Activated CD4-positive, alpha-beta memory T cell treated with anti-CD3 and anti-CD28 coated beads, Interleukin-2, amount 10 ng/mL, durations not matched to agents 7 days and 5 days (primary cell): ENCODE measurements at regions of chr9 and their contacts with region 1.

Region 1: GRCh38 chr9:128552153-128552743 is at the start of gene SPTAN1:
- DNase-seq: peak; percentile 96
- H3K4me3 Mint-ChIP-seq: peak within 1 kb of the TSS; percentile 94
- H3K27ac Mint-ChIP-seq: peak within 1 kb of the TSS; percentile 97
- H3K4me1 Mint-ChIP-seq: peaks cover 31% of the 10 kb centered on the region
- H3K27me3 Mint-ChIP-seq: no peaks in the 10 kb centered on the region
- total RNA-seq, gene SPTAN1: 313 to 321 TPM

Region 2: GRCh38 chr9:128370826-128371621 is 181.2 kb before region 1 on chr9 and contains the start of gene URM1:
- CTCF ChIA-PET with region 1: no interaction called
- POLR2A ChIA-PET with region 1: interaction called, 13 read pairs
- DNase-seq: peak; percentile 97
- H3K4me3 Mint-ChIP-seq: peak within 1 kb of the TSS; percentile 90
- H3K27ac Mint-ChIP-seq: peak within 1 kb of the TSS; percentile 93
- H3K4me1 Mint-ChIP-seq: peaks cover 32% of the 10 kb centered on the region
- H3K27me3 Mint-ChIP-seq: no peaks in the 10 kb centered on the region
- total RNA-seq, gene URM1: 62.8 to 64.3 TPM

Region 3: DNA sequence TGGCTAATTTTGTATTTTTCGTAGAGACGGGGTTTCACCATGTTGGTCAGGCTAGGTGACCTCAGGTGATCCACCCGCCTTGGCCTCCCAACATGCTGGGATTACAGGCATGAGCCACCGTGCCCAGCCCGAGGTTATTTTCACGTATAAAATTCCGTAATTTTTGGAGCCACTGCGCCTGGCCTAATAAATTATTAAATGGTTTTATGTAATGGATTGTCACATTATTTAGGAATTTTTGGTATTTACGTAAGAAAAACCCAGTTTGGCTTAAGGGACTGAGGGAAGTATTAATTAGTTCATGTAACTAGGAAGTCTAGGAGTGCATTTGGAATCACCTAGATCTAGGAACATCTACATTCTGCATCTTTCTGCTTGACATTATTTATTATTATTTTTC is 39.4 kb before region 1 on chr9:
- CTCF ChIA-PET with region 1: no interaction called
- POLR2A ChIA-PET with region 1: interaction called, 29 read pairs
- DNase-seq: no peak
- H3K4me3 Mint-ChIP-seq: no peak overlapping the region
- H3K27ac Mint-ChIP-seq: no peak overlapping the region
- H3K4me1 Mint-ChIP-seq: peaks cover 20% of the 10 kb centered on the region
- H3K27me3 Mint-ChIP-seq: no peaks in the 10 kb centered on the region

Region 4: DNA sequence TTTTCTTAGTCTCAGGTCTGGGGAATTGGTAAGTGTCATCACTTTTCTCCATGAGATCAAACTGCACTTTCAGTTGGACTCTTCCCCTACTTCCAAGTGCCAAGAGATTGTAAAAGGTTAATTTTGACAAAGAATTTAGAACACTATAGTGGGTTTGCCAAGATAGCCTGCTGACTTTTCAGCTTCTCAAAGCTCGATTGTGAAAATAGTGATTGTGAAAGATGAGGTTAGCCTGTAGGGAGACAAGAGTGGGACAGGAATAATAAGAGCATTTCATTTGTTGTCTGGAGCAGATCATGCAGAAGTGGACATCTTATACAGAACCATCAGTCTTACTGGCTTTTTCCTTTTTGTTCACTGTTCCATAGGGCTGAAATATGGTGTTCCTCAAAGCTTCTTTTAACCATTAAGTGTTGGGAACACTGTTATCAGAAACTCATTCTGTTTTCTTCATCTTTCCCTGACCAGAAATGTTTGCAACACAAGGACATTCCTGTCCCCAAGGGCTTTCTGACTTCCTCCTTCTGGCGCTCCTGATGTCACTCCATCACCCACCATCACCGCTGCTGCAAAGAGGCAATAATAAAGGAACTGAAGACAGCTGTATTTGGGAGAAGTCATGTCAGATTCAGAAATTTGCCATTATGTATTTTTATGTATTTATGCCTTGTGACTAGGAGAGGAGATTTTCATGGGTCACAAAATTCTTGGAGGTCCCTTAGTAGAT is 11.5 kb before region 1 on chr9:
- CTCF ChIA-PET with region 1: interaction called, 4 read pairs
- POLR2A ChIA-PET with region 1: interaction called, 58 read pairs
- DNase-seq: no peak
- H3K4me3 Mint-ChIP-seq: no peak overlapping the region
- H3K27ac Mint-ChIP-seq: no peak overlapping the region
- H3K4me1 Mint-ChIP-seq: peaks cover 12% of the 10 kb centered on the region
- H3K27me3 Mint-ChIP-seq: no peaks in the 10 kb centered on the region

Region 5: DNA sequence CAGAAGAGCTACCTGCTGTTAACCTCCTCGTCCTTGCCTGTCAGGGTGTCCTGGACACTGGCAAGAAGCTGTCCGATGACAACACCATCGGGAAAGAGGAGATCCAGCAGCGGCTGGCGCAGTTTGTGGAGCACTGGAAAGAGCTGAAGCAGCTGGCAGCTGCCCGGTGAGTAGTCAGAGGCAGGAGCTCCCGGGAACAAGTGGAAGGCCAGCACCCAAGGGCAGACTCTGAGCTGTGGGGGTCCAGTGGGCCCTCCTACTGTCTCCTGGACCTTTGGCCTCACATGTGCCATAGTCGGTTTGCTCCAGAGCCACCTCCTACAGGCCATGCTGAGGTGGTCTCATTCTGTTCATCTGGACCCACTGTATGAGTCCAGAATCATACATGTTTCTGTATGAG is 65.7 kb after region 1 on chr9:
- CTCF ChIA-PET with region 1: no interaction called
- POLR2A ChIA-PET with region 1: interaction called, 10 read pairs
- DNase-seq: no peak
- H3K4me3 Mint-ChIP-seq: no peak overlapping the region
- H3K27ac Mint-ChIP-seq: no peak overlapping the region
- H3K4me1 Mint-ChIP-seq: no peaks in the 10 kb centered on the region
- H3K27me3 Mint-ChIP-seq: no peaks in the 10 kb centered on the region